ENCODE measurements at regions of chr15 and their contacts with region 1.

Region 1: DNA sequence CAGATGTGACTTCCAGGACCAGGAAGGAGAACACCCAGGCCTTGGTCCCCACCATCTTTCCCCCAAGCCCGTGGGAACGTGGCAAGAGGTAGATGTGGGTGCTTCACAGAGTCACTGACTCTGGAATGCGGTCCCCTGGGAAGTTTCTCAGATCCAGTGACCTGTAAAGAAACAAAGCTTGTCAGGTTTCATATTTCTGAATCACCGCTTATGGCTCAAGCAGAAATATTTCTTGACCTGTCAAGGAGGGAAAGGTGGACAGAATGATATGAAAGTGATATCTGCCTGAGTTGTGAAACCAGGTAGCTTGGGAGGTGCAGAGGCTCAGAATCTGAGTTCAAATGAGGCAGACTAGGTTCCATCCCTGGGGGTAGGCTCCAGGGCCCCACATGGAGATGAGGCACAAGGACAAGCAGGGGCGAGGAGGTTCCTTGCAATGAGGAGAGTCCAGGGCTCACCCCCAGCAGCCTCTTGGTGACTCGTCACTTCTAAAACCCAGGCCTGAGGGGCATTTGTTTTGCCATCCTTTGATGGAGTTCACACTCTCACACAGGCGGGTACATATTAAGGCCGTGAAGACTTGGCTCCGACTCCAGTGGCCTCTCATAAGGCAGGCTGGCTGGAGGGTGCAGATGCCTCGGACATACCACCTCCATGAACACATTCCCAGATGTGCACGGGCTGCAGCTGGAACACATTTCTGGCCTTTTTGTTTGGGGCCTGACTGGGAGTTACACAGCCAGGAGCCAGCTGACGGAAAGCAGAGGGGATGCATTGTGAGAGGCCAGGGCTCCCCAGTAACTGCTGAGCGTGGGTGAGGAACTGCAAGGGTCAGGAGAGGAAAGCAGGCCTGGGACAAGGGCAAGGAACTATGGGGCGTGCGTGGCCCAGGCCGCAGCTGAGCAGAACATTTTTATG is 1.3 kb downstream of the CILP start:
- DNase-seq: peak; percentile 48
- H3K4me3 ChIP-seq: no peak overlapping the region
- H3K27ac ChIP-seq: peak overlapping the region; percentile 6 to 75
- H3K4me1 ChIP-seq: peaks cover 54% of the 10 kb centered on the region
- H3K27me3 ChIP-seq: no peaks in the 10 kb centered on the region
- CTCF ChIP-seq: no peak
- POLR2A ChIP-seq: no peak

Region 2: GRCh38 chr15:65249641-65250040 is 39.7 kb after region 1 on chr15:
- intact Hi-C with region 1: loop called (anchors 10 kb)
- DNase-seq: no peak
- H3K4me3 ChIP-seq: no peak overlapping the region
- H3K27ac ChIP-seq: peak overlapping the region in 1 of 2 donors; percentile 64
- H3K4me1 ChIP-seq: peaks cover 29% of the 10 kb centered on the region
- H3K27me3 ChIP-seq: no peaks in the 10 kb centered on the region
- CTCF ChIP-seq: no peak
- POLR2A ChIP-seq: no peak

Measured in testis (tissue), 5 donors.